Endothelial cell of umbilical vein (primary cell): ENCODE measurements at regions of chr9 and their contacts with region 1.

Region 1: DNA sequence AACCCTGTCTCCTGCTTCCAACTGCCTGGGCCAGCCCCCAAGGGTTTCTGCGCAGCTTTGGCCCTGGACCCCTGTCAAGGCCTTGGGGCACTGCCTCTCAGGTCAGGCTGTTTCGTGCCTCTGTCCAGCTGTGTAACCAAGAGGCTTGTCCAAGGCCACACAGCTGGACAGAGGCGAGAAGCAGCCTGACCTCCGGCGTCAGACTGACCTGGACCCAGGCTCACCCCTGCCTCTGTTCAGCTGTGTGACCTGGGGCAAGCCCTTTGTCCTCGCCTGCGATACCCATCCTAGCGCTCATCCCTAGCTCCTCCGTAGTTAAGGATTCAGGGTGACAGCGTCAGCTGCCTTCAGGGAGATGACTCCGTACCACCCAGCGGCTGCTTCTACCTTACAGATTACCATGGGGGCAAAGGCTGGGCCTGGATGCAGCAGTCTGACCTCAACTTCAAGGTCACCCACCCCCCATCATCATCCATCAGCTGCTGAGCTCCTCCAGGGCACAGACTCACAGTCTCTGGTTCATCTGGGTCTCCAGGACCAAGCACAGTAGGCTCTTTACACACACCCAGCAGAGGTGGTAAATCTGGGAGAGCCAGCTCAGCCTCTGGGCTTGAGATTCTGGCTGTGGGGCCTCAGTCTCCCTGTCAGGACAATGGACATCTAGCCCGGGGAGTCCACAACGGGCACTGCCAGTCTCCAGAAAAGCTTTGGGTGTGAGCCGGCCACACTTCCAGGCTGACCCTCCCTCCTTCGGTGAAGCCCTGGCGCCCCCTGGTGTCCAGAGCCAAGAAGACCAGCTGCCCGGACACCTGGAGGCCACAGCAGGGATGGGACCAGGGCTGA is 7.9 kb downstream of the AK1 start:
- DNase-seq: peak; percentile 78
- H3K4me3 ChIP-seq: no peak overlapping the region
- H3K27ac ChIP-seq: no peak overlapping the region
- H3K4me1 ChIP-seq: peaks cover 17% of the 10 kb centered on the region
- H3K27me3 ChIP-seq: no peaks in the 10 kb centered on the region
- CTCF ChIP-seq: peak; percentile 91 to 95
- POLR2A ChIP-seq: no peak

Region 2: GRCh38 chr9:127586537-127586936 is 283.0 kb before region 1 on chr9:
- CTCF ChIA-PET with region 1: interaction called, 6 read pairs
- POLR2A ChIA-PET with region 1: no interaction called
- dilution Hi-C with region 1: no loop called
- intact Hi-C with region 1: loop called (anchors 5 kb)
- DNase-seq: peak; percentile 70
- H3K4me3 ChIP-seq: no peak overlapping the region
- H3K27ac ChIP-seq: no peak overlapping the region
- H3K4me1 ChIP-seq: no peaks in the 10 kb centered on the region
- H3K27me3 ChIP-seq: no peaks in the 10 kb centered on the region
- CTCF ChIP-seq: peak; percentile 80 to 88
- POLR2A ChIP-seq: no peak

Region 3: DNA sequence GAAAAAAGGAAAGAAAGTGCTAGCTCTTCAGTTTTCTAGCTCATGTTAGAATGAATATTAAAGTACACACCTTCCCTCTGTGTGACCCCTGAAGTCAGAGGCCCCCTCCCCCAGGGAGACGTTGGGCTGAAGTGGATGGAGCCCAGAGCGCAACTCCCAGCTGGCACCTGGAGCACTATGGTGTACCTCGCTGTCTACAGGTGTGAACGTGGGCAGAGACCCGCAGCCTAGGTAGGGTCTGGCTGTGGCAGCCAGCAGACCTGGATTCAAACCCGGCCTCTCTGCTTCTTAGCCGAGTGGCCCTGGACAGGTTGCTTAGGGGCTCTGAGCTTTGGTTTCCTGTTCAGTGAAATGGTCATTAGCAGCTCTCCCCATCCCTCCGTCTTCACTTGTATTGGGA is 140.7 kb before region 1 on chr9:
- CTCF ChIA-PET with region 1: no interaction called
- POLR2A ChIA-PET with region 1: no interaction called
- dilution Hi-C with region 1: no loop called
- intact Hi-C with region 1: no loop called
- DNase-seq: no peak
- H3K4me3 ChIP-seq: no peak overlapping the region
- H3K27ac ChIP-seq: no peak overlapping the region
- H3K4me1 ChIP-seq: no peaks in the 10 kb centered on the region
- H3K27me3 ChIP-seq: no peaks in the 10 kb centered on the region
- CTCF ChIP-seq: no peak
- POLR2A ChIP-seq: no peak

Region 4: DNA sequence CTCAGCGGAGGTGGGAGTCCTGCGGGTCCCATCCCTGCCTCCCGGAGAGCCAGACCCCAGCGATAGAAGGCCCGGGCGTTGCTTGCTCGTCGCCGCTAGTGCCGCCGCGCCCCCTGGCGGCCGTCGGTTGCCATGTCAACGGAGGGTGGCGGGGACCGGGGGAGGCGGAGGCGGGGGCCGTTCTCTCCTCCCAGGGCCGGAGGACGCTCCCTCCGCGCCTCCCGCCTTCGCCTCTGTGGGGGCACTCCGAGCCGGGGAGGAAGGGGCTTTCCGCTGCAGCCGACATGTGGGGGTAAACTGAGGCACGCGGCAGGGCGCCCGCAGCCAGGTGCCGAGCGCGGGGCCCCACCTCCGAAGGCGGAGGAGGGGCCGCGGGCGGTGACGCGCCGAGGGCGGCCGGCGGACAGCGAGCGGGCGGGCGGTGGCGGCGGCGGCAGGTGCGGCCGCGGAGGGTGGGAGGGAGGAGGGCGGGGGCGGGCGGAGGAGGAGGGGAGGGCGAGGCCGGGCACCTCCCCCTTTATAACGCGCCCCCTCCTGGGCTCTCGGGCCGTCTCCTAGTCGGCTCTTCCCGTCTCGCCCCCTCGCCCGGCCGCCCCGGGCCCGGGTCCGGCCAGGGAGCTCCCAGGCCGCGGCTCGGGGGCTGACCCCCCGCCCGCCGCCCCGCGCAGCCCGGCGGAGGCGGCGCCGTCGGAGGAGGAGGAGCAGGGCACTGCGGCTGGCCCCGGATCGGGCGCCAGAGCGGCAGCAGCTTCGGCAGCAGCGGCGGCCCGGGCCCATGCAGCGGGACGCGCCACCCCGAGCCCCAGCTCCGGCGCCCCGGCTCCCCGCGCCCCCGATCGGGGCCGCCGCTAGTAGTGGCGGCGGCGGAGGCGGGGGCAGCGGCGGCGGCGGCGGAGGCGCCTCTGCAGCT is 84.3 kb before region 1 on chr9:
- CTCF ChIA-PET with region 1: interaction called, 58 read pairs
- POLR2A ChIA-PET with region 1: interaction called, 4 read pairs
- dilution Hi-C with region 1: no loop called
- intact Hi-C with region 1: loop called (anchors 1 kb)
- DNase-seq: peak; percentile 89
- H3K4me3 ChIP-seq: peak overlapping the region in 1 of 3 experiments; percentile 89
- H3K27ac ChIP-seq: peak overlapping the region; percentile 69
- H3K4me1 ChIP-seq: peaks cover 44% of the 10 kb centered on the region
- H3K27me3 ChIP-seq: no peaks in the 10 kb centered on the region
- CTCF ChIP-seq: peak; percentile 64 to 88
- POLR2A ChIP-seq: peak; percentile 24

Region 5: DNA sequence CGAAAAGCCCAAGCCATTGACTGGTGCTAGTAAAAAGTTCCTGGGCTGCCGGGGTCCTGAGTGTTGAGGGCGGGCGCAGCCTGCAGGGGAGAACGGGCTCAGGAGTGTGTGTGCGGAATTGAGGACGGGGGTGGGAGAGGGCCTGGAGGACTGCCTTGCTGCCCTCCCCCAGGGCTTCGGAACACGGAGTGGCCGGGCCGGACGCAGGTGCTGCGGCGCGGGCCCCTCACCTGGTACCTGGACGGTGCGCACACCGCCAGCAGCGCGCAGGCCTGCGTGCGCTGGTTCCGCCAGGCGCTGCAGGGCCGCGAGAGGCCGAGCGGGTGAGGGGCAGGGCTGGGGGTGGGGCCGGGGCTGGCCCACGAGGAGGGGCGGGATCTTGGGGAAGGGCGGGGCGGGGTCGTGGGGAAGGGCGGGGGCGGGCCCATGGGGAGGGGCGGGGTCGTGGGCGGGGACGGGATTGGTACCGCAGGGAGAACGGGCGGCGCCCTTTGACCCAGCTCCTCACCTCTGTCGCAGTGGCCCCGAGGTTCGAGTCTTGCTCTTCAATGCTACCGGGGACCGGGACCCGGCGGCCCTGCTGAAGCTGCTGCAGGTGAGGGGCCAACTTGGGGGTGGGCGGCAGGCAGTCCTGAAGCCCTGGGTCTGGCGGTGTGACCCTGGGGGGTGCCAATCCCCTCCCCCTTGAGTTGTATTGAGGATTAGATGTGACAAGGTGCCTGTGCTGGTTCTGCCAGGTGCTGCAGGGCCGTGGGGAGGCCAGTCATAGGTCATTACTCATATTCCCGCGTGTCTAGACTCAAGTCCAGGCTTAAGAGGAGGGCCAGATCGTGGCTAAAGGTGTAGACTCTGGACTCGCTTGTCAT is 59.8 kb before region 1 on chr9:
- CTCF ChIA-PET with region 1: interaction called, 76 read pairs
- POLR2A ChIA-PET with region 1: no interaction called
- dilution Hi-C with region 1: no loop called
- intact Hi-C with region 1: no loop called
- DNase-seq: no peak
- H3K4me3 ChIP-seq: no peak overlapping the region
- H3K27ac ChIP-seq: no peak overlapping the region
- H3K4me1 ChIP-seq: no peaks in the 10 kb centered on the region
- H3K27me3 ChIP-seq: no peaks in the 10 kb centered on the region
- CTCF ChIP-seq: no peak
- POLR2A ChIP-seq: peak; percentile 4

Region 6: DNA sequence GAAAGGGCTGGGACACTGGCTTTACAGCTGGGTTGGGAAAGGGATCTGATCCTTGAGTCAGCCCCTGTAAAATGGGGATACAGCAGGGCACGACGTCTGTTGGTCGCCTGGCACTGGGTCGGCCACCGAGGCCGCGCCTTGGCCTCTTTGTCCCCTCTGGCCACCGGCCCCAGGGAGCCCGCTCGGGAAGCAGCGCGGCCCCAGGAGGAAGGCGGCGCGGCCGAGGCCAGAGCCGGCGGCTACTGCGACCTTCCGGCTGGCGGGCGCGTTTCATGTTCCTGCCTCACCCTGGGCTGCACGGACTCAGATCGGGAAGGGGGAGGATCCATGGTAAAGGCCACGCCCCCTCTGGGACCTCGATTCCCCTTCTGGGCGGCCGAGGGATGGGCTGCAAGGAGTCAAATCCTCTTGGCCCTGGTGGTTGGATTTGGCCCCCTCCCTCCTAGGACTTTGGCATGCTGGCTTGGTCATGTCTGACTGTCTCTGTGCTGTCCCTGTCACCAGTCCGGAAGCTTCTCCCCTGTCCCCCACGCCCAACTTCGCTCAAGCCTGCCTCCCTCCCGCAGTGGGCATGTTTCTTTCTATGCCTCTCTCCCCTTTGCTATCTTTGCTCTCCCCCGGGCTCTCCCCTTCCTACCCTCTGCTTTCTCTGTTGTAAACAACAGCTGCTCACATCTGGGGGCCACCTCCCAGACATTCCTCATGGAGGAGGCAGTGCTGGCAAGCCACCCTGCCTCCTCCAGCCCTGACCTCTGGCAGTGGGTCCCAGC is 41.1 kb before region 1 on chr9:
- CTCF ChIA-PET with region 1: interaction called, 33 read pairs
- POLR2A ChIA-PET with region 1: interaction called, 5 read pairs
- dilution Hi-C with region 1: no loop called
- intact Hi-C with region 1: loop called (anchors 1 kb)
- DNase-seq: peak; percentile 79
- H3K4me3 ChIP-seq: no peak overlapping the region
- H3K27ac ChIP-seq: peak overlapping the region; percentile 81
- H3K4me1 ChIP-seq: peaks cover 44% of the 10 kb centered on the region
- H3K27me3 ChIP-seq: no peaks in the 10 kb centered on the region
- CTCF ChIP-seq: no peak
- POLR2A ChIP-seq: peak; percentile 64

Region 7: DNA sequence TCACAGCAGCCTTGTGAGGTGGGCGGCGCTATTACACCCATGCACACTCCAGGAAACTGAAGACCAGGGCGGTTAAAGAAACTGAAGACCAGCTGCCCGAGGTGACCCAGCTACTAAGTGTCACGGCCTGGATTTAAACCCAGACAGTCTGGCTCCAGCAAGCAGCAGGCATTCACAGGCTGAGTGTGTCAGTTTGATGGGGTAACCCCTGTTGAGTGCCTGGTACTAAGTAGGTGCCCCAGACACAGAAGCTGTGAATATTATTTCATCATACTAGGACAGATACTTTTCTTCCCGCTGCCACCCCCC is 22.4 kb before region 1 on chr9:
- CTCF ChIA-PET with region 1: interaction called, 101 read pairs
- POLR2A ChIA-PET with region 1: no interaction called
- dilution Hi-C with region 1: no loop called
- intact Hi-C with region 1: no loop called
- DNase-seq: peak; percentile 80
- H3K4me3 ChIP-seq: peak overlapping the region in 1 of 3 experiments; percentile 41
- H3K27ac ChIP-seq: peak overlapping the region; percentile 97
- H3K4me1 ChIP-seq: peaks cover 76% of the 10 kb centered on the region
- H3K27me3 ChIP-seq: no peaks in the 10 kb centered on the region
- CTCF ChIP-seq: no peak
- POLR2A ChIP-seq: no peak

Region 8: GRCh38 chr9:127916665-127917613 is 47.4 kb after region 1 on chr9 and contains the start of gene ST6GALNAC4:
- CTCF ChIA-PET with region 1: interaction called, 27 read pairs
- POLR2A ChIA-PET with region 1: interaction called, 3 read pairs
- dilution Hi-C with region 1: no loop called
- intact Hi-C with region 1: no loop called
- DNase-seq: peak; percentile 89
- H3K4me3 ChIP-seq: peak within 1 kb of the TSS; percentile 59 to 77 (median 71)
- H3K27ac ChIP-seq: peak within 1 kb of the TSS; percentile 55
- H3K4me1 ChIP-seq: peaks cover 39% of the 10 kb centered on the region
- H3K27me3 ChIP-seq: no peaks in the 10 kb centered on the region
- CTCF ChIP-seq: no peak
- POLR2A ChIP-seq: peak; percentile 82
- total RNA-seq, gene ST6GALNAC4: 38.1 and 45.9 TPM in 2 replicates